ENCODE measurements at regions of chr10 and their contacts with region 1.

Region 1: GRCh38 chr10:103659674-103660363 is 166.3 kb downstream of the NEURL1 start:
- DNase-seq: peak in 8 of 10 donors; percentile 40 to 65 (median 50)
- ATAC-seq: peak; percentile 66 to 83
- H3K4me3 Mint-ChIP-seq: peak overlapping the region; percentile 86 to 95 (median 90)
- H3K27ac Mint-ChIP-seq: peak overlapping the region; percentile 86 to 96 (median 94)
- H3K4me1 Mint-ChIP-seq: peaks cover 7 to 26% (median 18%) of the 10 kb centered on the region in 4 donors
- H3K27me3 Mint-ChIP-seq: no peaks in the 10 kb centered on the region

Region 2: GRCh38 chr10:103678178-103678526 is 18.3 kb after region 1 on chr10:
- POLR2A ChIA-PET with region 1: interaction called, 21 read pairs
- DNase-seq: peak; percentile 67 to 94 (median 88)
- ATAC-seq: peak; percentile 96 to 97
- H3K4me3 Mint-ChIP-seq: peak overlapping the region; percentile 78 to 89 (median 84)
- H3K27ac Mint-ChIP-seq: peak overlapping the region; percentile 83 to 98 (median 96)
- H3K4me1 Mint-ChIP-seq: peaks cover 6 to 26% (median 17%) of the 10 kb centered on the region in 4 donors
- H3K27me3 Mint-ChIP-seq: no peaks in the 10 kb centered on the region